ENCODE measurements at regions of chr2 and their contacts with region 1.

Region 1: DNA sequence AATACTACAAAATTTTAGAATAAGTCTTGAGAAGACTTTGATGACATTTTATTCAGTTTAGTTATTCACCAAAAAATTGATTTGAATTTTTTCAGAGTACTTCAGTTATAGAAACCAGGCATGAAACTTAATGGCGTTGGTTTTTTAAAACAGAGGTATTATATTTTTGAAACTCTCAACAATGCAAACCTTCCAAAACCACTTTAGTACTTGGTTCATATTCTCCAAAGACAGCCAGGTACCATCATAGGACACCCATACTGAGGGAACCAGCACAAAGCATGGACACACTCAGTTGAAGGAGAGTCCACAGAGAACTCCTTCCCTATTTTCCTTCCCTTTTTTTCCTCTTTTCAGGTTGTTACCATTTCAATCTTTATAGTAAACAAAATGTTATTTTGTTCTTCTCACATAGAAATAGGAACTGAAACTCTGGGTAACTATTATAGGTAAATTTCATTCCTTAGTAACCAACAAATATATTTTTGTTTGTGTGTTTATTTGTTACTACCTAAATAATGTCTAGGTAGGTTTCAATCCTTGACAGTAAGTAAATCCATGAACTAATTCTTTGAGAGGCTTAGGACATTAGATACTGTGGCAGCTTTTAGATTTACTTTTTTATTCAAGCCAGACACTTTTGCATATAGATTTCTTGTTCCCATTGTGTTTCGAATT is 95.8 kb downstream of the TMEFF2 start:
- DNase-seq: no peak
- H3K4me3 ChIP-seq: no peak overlapping the region
- H3K27ac ChIP-seq: no peak overlapping the region
- H3K4me1 ChIP-seq: no peaks in the 10 kb centered on the region
- H3K27me3 ChIP-seq: no peaks in the 10 kb centered on the region
- CTCF ChIP-seq: no peak

Region 2: DNA sequence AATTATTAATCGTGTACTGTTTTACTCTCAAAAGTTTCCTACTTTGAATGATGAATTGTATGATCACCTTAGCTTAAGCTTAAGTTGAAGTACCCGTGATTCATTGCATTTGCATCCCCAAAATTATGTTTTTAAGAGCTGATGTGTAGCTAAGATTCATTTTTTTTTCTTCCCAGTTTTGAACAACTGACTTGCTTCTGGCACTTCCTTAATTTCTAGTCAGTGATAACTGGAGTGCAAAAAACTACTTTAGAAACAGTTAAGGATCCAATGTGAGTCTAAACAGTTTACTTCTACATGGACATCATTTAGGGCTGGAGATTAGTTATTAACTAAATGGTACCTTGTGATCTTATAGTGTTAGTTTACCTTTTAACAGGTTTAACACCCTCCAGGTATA is 128.1 kb before region 1 on chr2:
- intact Hi-C with region 1: loop called (anchors 1 kb)
- DNase-seq: no peak
- H3K4me3 ChIP-seq: no peak overlapping the region
- H3K27ac ChIP-seq: no peak overlapping the region
- H3K4me1 ChIP-seq: no peaks in the 10 kb centered on the region
- H3K27me3 ChIP-seq: no peaks in the 10 kb centered on the region
- CTCF ChIP-seq: no peak

Region 3: GRCh38 chr2:192070099-192070498 is 28.9 kb before region 1 on chr2:
- intact Hi-C with region 1: no loop called
- DNase-seq: no peak
- H3K4me3 ChIP-seq: no peak overlapping the region
- H3K27ac ChIP-seq: no peak overlapping the region
- H3K4me1 ChIP-seq: no peaks in the 10 kb centered on the region
- H3K27me3 ChIP-seq: no peaks in the 10 kb centered on the region
- CTCF ChIP-seq: no peak